ENCODE measurements at regions of chr5 and their contacts with region 1.

Region 1: DNA sequence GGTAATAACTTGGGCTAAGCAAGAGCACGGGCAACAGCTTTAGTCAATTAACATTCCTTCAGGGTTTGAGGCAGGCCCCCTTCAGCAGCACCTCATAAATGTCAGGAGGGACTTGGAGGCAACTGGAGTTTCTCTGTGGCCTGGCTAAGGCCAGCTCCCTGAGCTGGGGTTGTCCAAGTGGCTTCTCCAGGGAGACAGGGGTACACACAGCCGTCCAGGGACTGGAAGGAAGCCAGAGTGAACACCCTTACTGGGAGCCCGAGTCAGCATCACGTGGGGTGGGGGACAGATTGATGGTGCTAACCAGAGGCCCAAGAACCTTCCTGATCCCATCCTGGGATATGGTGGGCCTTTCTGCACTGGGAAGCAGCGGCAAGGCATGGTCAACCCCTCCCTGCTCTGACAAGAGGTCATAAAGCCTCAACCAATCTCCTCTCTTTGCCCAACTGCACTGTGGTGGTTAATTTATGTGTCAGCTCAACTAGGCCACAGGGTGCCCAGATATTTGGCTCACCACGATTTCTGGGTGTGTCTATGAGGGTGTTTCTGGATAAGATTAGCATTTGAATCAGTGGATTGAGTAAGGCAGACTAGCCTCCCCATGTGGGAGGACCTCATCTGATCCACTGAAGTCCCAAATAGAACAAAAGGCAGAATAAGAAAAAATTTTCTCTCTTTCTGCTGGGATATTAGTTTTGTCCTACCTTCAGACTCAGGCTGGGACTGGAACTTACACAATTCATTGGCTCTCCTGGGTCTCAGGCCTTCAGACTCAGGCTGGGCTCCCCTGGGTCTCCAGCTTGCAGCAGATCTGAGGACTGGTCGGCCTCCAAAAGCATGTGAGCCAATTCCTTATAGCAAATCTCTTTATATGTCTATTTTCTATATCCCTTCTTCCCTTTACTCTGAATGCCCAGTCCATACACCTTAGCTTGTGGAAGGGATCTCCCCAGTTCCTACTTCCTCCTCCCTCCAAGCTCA is 127.2 kb upstream of the LARP1 start:
- DNase-seq: no peak
- ATAC-seq: peak in 1 of 4 donors; percentile 23
- H3K4me3 ChIP-seq: no peak overlapping the region
- H3K27ac ChIP-seq: no peak overlapping the region
- H3K4me1 ChIP-seq: no peaks in the 10 kb centered on the region
- H3K27me3 ChIP-seq: no peaks in the 10 kb centered on the region
- CTCF ChIP-seq: no peak

Region 2: DNA sequence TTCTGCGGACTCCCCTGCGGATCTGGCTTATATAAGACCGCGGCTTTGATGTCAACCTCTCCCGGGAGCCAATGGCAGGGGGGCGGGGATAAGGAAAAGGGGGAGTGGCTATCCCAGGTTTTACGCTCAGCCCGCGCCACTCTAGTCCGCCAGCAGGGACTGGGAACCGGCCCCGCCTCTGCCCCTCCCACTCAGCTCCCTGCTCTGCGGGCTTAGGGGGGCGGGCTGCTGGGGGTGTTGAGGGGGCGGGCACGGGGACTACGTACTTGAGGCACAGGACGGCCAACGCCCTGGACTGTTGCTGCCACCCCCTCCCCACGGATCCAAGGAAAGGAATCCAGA is 149.8 kb before region 1 on chr5 and contains the start of gene HAND1:
- intact Hi-C with region 1: loop called in 1 of 3 experiments (anchors 10 kb)
- DNase-seq: peak; percentile 52 to 78 (median 66)
- ATAC-seq: peak; percentile 81 to 93 (median 86)
- H3K4me3 ChIP-seq: peak within 1 kb of the TSS; percentile 6 to 43 (median 23)
- H3K27ac ChIP-seq: no peak within 1 kb of the TSS
- H3K4me1 ChIP-seq: peaks cover 0 to 11% (median 3%) of the 10 kb centered on the region in 3 donors
- H3K27me3 ChIP-seq: peaks cover 13 to 73% (median 35%) of the 10 kb centered on the region in 4 donors
- CTCF ChIP-seq: no peak
- total RNA-seq, gene HAND1: 0.08 to 0.09 TPM in 2 of 6 donors, not detected in the others

Measured in pancreas (tissue), 10 donors.